ENCODE measurements at regions of chr10 and their contacts with region 1.

Region 1: DNA sequence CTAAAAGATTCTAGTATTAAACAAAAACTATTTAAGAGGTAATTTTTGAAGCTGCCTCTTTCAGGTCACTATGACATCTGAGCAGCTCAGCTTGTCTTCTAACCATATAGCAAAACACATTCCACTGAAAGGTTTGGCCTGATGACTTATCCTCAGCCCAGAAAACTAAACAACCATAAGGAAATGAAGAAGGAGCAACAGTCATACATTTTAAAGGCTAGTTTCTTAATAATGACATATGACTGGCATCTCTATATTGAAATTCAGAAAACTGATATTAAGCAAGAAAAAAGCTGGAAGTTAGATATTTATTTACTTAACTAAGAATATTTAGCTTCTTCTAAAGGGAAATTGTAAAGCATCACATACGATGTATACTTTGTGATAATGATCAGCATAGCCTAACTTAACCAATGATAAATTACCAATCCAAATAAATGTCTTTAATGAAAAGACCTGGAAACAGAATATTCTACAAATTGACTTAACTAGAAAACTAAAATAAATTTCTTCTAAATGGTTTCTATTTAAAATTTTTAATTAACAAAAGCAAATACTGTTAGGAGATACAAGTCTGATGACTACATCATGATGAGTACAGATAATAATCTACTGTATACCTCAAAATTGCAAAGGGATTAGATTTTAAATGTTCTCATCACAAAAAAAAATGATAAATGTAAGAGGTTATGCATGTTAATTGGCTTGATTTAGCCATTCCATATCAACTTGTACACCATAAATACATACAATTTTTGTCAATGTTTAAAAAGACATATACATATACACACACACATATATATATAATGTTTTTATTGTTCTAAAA is 24.4 kb downstream of the NT5C2 start:
- DNase-seq: peak in 1 of 2 experiments; percentile 88
- H3K4me3 ChIP-seq: peak overlapping the region; percentile 32; the same call in 1 of the 2 replicates
- H3K27ac ChIP-seq: peak overlapping the region; percentile 84
- H3K4me1 ChIP-seq: peaks cover 62% of the 10 kb centered on the region
- H3K27me3 ChIP-seq: no peaks in the 10 kb centered on the region
- CTCF ChIP-seq: no peak

Region 2: GRCh38 chr10:102835007-102835482 is 333.7 kb before region 1 on chr10:
- CTCF ChIA-PET with region 1: no interaction called
- POLR2A ChIA-PET with region 1: no interaction called
- intact Hi-C with region 1: no loop called
- DNase-seq: peak; percentile 38 to 58
- H3K4me3 ChIP-seq: no peak overlapping the region
- H3K27ac ChIP-seq: no peak overlapping the region
- H3K4me1 ChIP-seq: no peaks in the 10 kb centered on the region
- H3K27me3 ChIP-seq: no peaks in the 10 kb centered on the region
- CTCF ChIP-seq: peak; percentile 80

Region 3: GRCh38 chr10:103102195-103102594 is 66.5 kb before region 1 on chr10:
- CTCF ChIA-PET with region 1: no interaction called
- POLR2A ChIA-PET with region 1: no interaction called
- intact Hi-C with region 1: loop called (anchors 10 kb)
- DNase-seq: no peak
- H3K4me3 ChIP-seq: no peak overlapping the region
- H3K27ac ChIP-seq: no peak overlapping the region
- H3K4me1 ChIP-seq: 0 out of 2 replicates have a peak, but pooled peaks cover 7% of the 10 kb centered on the region
- H3K27me3 ChIP-seq: no peaks in the 10 kb centered on the region
- CTCF ChIP-seq: no peak

Region 4: DNA sequence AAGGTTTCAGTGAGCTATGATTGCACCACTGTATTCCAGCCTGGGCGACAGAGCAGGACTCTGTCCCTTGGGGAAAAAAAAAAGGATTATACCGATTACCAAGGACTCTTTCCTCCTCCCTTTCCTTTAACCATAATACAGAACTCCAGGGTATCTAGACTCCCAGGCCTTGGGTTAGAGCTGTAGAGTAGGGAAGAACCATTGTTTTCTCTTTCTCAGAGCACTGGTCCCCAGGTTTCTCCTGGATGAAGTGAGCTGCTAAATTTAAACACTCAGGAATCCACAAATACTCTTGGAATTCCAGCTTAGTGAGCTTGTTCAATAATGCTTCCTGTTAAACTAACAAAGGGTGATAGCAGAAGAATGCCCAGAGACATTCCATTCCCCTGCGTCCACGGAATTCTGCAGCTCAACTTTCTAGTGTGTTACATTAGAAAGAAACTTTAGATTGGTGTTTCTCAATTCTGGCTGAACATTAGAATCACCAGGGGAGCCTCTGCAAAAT is 62.4 kb after region 1 on chr10:
- CTCF ChIA-PET with region 1: no interaction called
- POLR2A ChIA-PET with region 1: interaction called, 18 read pairs
- intact Hi-C with region 1: no loop called
- DNase-seq: peak; percentile 68 to 94
- H3K4me3 ChIP-seq: peak overlapping the region; percentile 4; the same call in 1 of the 2 replicates
- H3K27ac ChIP-seq: peak overlapping the region; percentile 100
- H3K4me1 ChIP-seq: peaks cover 70% of the 10 kb centered on the region
- H3K27me3 ChIP-seq: no peaks in the 10 kb centered on the region
- CTCF ChIP-seq: no peak

Region 5: GRCh38 chr10:103238506-103239252 is 70.0 kb after region 1 on chr10:
- CTCF ChIA-PET with region 1: interaction called, 11 read pairs
- POLR2A ChIA-PET with region 1: interaction called, 3 read pairs
- intact Hi-C with region 1: loop called (anchors 5 kb)
- DNase-seq: peak; percentile 82 to 96
- H3K4me3 ChIP-seq: no peak overlapping the region
- H3K27ac ChIP-seq: peak overlapping the region; percentile 100
- H3K4me1 ChIP-seq: peaks cover 58% of the 10 kb centered on the region
- H3K27me3 ChIP-seq: no peaks in the 10 kb centered on the region
- CTCF ChIP-seq: peak; percentile 57; the same call in 1 of the 2 replicates

Region 6: DNA sequence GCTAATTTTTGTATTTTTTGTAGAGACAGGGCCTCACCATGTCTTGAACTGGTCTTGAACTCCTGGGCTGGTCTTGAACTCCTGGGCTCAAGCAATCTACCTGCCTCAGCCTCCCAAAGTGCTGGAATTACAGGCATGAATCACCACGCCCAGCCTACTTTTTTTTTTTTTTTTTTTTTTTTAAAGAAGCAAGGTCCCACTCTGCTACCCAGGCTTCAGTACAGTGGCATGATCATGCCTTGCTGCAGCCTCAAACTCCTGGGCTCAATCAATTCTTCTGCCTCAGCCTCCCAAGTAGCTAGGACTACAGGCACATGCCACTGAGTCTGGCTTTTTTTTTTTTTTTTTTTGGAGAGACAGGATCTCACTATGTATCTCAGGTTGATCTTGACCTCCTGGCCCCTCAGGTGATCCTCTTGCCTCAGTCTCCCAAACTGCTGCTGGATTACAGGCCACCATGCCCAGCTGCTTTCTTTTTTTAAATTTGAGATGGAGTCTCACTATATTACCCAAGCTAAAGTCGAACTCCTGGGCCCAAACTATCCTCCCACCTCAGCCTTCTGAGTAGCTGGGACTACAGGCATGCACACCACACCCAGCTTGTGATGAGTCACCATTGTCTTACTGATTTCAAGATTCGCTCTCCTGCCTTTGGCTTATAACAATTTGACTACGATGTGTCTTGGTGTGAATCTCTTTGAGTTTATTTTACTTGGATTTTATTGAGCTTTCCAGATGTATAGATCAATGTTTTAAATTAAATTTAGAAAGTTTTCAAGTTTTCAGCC is 86.0 kb after region 1 on chr10:
- CTCF ChIA-PET with region 1: no interaction called
- POLR2A ChIA-PET with region 1: interaction called, 16 read pairs
- intact Hi-C with region 1: no loop called
- DNase-seq: peak in 1 of 2 experiments; percentile 63
- H3K4me3 ChIP-seq: no peak overlapping the region
- H3K27ac ChIP-seq: no peak overlapping the region
- H3K4me1 ChIP-seq: peaks cover 6% of the 10 kb centered on the region
- H3K27me3 ChIP-seq: no peaks in the 10 kb centered on the region
- CTCF ChIP-seq: no peak

Region 7: GRCh38 chr10:103355906-103356599 is 187.4 kb after region 1 on chr10:
- CTCF ChIA-PET with region 1: no interaction called
- POLR2A ChIA-PET with region 1: no interaction called
- intact Hi-C with region 1: no loop called
- DNase-seq: no peak
- H3K4me3 ChIP-seq: no peak overlapping the region
- H3K27ac ChIP-seq: no peak overlapping the region
- H3K4me1 ChIP-seq: peaks cover 5% of the 10 kb centered on the region; the same call in 1 of the 2 replicates
- H3K27me3 ChIP-seq: no peaks in the 10 kb centered on the region
- CTCF ChIP-seq: no peak

Region 8: GRCh38 chr10:103592186-103593021 is 423.7 kb after region 1 on chr10:
- CTCF ChIA-PET with region 1: no interaction called
- POLR2A ChIA-PET with region 1: no interaction called
- intact Hi-C with region 1: no loop called
- DNase-seq: peak in 1 of 2 experiments; percentile 41
- H3K4me3 ChIP-seq: no peak overlapping the region
- H3K27ac ChIP-seq: no peak overlapping the region
- H3K4me1 ChIP-seq: no peaks in the 10 kb centered on the region; the same call in 1 of the 2 replicates
- H3K27me3 ChIP-seq: no peaks in the 10 kb centered on the region
- CTCF ChIP-seq: peak; percentile 74